HEK293 (cell line): ENCODE measurements at regions of chr1 and their contacts with region 1.

Region 1: GRCh38 chr1:7454052-7454815 is 316.9 kb upstream of the VAMP3 start:
- H3K4me3 ChIP-seq: no peak overlapping the region
- H3K27ac ChIP-seq: no peak overlapping the region
- H3K4me1 ChIP-seq: no peaks in the 10 kb centered on the region
- CTCF ChIP-seq: peak; percentile 54; the same call in 1 of the 2 replicates

Region 2: DNA sequence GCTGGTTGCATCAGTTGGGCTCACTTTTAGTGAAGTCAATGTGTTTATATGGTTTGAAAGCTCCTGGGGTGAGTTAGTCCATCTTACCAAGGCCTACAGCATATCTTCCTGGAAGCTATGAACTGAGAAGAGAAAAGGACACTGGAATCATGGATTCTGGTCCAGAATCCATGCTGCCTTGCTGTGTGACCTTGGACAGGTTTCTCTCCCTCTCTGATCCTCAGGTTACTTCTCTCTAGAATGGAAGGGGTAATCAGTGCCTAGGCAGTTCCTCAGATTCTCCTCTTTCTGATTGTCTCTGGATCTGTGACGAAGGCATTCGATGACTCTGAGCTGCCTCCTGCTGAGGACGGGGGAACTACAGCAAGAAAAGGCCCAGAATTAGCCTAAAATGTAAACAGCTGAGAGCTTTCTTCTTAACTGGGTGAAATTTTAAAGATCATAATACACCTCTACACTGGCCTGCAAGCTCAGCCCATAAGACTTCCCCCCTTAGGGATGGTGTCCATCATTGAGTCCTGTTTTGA is 108.1 kb before region 1 on chr1:
- CTCF ChIA-PET with region 1: no interaction called
- POLR2A ChIA-PET with region 1: no interaction called
- H3K4me3 ChIP-seq: no peak overlapping the region
- H3K27ac ChIP-seq: no peak overlapping the region
- H3K4me1 ChIP-seq: peaks cover 7% of the 10 kb centered on the region; the same call in 1 of the 2 replicates
- CTCF ChIP-seq: no peak

Region 3: GRCh38 chr1:7539769-7540175 is 85.5 kb after region 1 on chr1:
- CTCF ChIA-PET with region 1: interaction called, 11 read pairs
- POLR2A ChIA-PET with region 1: no interaction called
- H3K4me3 ChIP-seq: no peak overlapping the region
- H3K27ac ChIP-seq: no peak overlapping the region
- H3K4me1 ChIP-seq: no peaks in the 10 kb centered on the region
- CTCF ChIP-seq: no peak